ENCODE measurements at regions of chr11 and their contacts with region 1.

Region 1: DNA sequence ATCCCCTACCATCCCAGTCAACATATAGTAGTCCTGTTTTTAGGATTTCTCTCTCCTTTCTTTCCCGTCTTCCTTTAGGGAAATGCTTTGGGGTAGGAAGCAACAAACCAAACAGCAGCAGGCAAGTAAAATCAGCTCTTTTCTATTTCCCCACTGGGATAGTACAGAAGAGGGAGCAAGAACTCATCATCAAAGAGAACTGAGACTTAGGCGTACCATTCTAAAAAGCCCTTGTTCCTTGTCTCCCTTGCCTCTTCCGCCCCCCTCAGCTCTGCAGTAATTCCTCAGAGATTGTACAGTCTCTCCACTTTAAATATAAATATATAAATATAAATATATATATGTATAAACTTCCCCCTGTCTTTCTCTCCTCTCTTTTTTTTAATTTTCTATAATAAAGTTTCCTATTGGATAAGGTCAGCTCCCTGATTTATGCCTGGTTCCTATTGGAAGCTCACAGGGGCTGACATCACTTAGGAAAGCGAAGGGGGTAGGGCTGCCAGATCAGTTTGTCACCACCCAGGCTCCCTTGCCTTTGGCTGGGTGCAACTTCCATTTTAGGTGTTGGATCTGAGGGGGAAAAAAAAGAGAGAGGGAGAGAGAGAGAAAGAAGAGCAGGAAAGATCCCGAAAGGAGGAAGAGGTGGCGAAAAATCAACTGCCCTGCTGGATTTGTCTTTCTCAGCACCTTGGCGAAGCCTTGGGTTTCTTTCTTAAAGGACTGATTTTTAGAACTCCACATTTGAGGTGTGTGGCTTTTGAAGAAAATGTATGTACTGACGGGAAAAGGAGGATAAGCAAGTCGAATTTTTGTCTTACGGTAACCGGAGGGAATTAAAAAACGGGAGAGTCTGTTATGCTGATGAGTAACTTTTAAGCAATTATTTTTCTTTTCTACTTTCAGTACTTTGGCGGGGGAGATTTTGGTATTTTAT is at the start of gene CTNND1:
- DNase-seq: peak; percentile 86
- ATAC-seq: peak; percentile 99
- H3K4me3 ChIP-seq: peak within 1 kb of the TSS; percentile 90 to 99
- H3K27ac ChIP-seq: peak within 1 kb of the TSS; percentile 99
- H3K4me1 ChIP-seq: peaks cover 20% of the 10 kb centered on the region
- H3K27me3 ChIP-seq: no peaks in the 10 kb centered on the region
- CTCF ChIP-seq: no peak
- total RNA-seq, gene CTNND1: 189 TPM

Region 2: GRCh38 chr11:57778318-57779037 is 16.9 kb after region 1 on chr11:
- CTCF ChIA-PET with region 1: interaction called, 3 read pairs
- POLR2A ChIA-PET with region 1: interaction called, 22 read pairs
- in situ Hi-C with region 1: no loop called
- intact Hi-C with region 1: no loop called
- DNase-seq: peak; percentile 78
- ATAC-seq: peak; percentile 94
- H3K4me3 ChIP-seq: peak overlapping the region; percentile 30 to 43
- H3K27ac ChIP-seq: peak overlapping the region; percentile 99
- H3K4me1 ChIP-seq: peaks cover 86% of the 10 kb centered on the region
- H3K27me3 ChIP-seq: no peaks in the 10 kb centered on the region
- CTCF ChIP-seq: no peak

Region 3: DNA sequence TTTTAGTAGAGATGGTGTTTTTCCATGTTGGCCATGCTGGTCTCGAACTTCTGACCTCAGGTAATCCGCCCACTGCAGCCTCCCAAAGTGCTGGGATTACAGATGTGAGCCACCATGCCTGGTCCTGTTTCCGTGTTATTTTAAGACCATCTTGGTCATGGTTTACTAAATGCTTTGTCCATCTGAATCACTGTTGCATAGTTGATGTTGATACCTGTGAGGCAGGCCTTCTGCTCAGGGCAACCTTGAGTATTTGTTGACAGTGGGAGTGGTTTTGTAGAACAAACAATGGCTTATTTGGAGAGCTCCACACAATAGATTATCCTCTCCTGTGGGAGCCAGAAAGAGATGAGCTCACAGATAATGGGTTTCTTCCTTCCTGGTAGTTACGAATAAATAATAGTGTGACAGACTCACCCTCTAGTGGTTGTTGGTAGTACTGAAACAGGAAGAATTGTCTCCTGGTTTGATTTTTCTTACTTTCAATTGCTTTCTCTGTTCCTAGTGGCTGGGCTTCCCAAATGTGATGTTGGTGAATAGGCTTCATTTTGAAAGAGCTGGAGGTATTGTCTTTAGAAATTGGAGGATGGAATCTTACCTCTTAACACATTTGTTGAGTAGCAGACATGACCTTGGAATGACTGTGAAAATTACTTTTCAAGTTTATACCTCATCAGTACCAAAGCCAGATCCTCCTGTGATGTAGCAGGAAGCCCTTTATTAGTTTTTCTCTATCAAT is 39.0 kb after region 1 on chr11:
- CTCF ChIA-PET with region 1: interaction called, 8 read pairs
- POLR2A ChIA-PET with region 1: interaction called, 11 read pairs
- in situ Hi-C with region 1: no loop called
- intact Hi-C with region 1: no loop called
- DNase-seq: peak; percentile 59
- ATAC-seq: peak; percentile 76
- H3K4me3 ChIP-seq: no peak overlapping the region
- H3K27ac ChIP-seq: peak overlapping the region; percentile 88
- H3K4me1 ChIP-seq: peaks cover 33% of the 10 kb centered on the region
- H3K27me3 ChIP-seq: no peaks in the 10 kb centered on the region
- CTCF ChIP-seq: peak; percentile 84

Region 4: DNA sequence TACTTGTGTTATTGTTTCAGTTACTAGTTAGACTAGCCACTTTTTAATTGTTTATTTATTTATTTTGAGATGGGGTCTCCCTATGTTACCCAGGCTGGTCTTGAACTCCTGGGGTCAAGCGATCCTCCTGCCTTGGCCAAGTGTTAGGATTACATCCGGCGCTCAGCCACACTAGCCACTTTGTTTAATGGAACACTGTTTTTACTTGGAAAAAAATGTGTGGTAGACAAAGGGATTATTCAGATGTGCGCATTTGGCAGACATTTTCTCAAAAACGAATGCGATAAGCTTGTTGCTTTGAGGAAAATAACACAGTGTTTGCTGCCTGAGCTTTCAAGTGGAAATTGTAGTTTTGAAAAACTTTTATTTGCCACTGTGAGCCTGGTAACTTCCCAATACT is 51.1 kb after region 1 on chr11:
- CTCF ChIA-PET with region 1: no interaction called
- POLR2A ChIA-PET with region 1: interaction called, 11 read pairs
- in situ Hi-C with region 1: no loop called
- intact Hi-C with region 1: no loop called
- DNase-seq: no peak
- ATAC-seq: no peak
- H3K4me3 ChIP-seq: no peak overlapping the region
- H3K27ac ChIP-seq: no peak overlapping the region
- H3K4me1 ChIP-seq: no peaks in the 10 kb centered on the region
- H3K27me3 ChIP-seq: no peaks in the 10 kb centered on the region
- CTCF ChIP-seq: no peak

Measured in Panc1 (cell line).